ENCODE measurements at regions of chr6 and their contacts with region 1.

Region 1: DNA sequence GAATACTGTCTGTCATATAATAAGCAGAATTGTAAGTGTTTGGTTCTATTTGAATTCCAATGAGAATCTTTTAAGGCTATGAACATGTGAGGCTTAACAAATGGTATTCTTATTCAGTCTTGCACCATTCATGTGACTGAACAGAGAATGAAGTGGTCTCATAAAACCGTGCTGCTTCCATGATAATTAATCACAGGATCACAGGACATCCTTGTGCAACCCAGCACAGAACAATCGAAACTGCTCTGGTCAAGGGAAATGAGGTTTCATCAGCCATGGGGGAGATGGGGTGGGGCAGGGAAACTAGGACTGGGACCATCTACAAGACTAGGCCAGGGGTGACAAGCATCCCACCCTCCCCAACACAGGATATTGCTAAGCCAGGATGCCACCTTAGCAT is 6.0 kb downstream of the PPIL6 start:
- DNase-seq: no peak
- ATAC-seq: no peak
- H3K4me3 ChIP-seq: no peak overlapping the region
- H3K27ac ChIP-seq: no peak overlapping the region
- H3K4me1 ChIP-seq: peaks cover 0 to 8% (median 3%) of the 10 kb centered on the region in 12 donors
- H3K27me3 ChIP-seq: no peaks in the 10 kb centered on the region
- CTCF ChIP-seq: no peak
- POLR2A ChIP-seq: no peak

Region 2: GRCh38 chr6:109393888-109394285 is 40.6 kb before region 1 on chr6:
- intact Hi-C with region 1: loop called in 1 of 10 experiments (anchors 5 kb)
- DNase-seq: no peak
- ATAC-seq: no peak
- H3K4me3 ChIP-seq: no peak overlapping the region
- H3K27ac ChIP-seq: no peak overlapping the region
- H3K4me1 ChIP-seq: peaks cover 0 to 21% (median 11%) of the 10 kb centered on the region in 12 donors
- H3K27me3 ChIP-seq: no peaks in the 10 kb centered on the region
- CTCF ChIP-seq: no peak
- POLR2A ChIP-seq: no peak